Activated T-helper 1 cell treated with anti-CD3 and anti-CD28 coated beads, Interleukin-12 subunit alpha, Interleukin-12 subunit beta, Interleukin-2, Interleukin-4 antibody, amounts not matched to agents 30 ng/mL and 10 ng/mL and 1 ng/mL, durations not matched to agents 14 hours and 24 hours and 36 hours (primary cell): ENCODE measurements at regions of chr2 and their contacts with region 1.

Region 1: DNA sequence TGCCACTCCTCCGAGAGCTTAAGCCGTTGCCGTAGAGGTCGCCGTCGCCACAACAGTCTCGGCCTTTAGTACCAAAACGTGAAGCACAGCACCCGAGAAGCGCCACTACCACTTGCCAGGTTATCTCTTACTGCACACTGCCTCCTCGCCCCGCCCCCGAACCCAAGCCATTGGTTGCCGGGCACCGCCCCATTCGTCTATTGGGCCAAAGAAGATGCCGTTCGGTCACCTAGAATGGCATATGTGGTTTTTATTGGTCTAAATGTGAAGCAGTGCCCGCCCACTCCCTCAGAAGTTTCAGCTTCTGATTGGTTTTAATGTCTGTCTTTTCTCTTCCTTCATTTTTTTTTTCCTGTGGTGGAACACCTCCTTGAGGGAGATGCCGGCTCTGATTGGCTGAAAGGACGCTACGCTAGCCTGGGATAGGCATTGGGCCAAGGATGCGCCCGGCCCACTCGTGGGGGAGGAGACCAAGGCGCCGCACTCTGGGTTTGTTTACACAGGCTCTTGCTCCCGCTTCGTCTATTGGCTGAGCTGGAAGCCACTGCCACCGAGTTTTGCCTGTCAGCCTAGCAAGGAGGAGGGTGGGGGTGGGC is at the start of gene PAIP2B:
- DNase-seq: peak; percentile 97
- H3K4me3 Mint-ChIP-seq: peak within 1 kb of the TSS; percentile 91
- H3K27ac Mint-ChIP-seq: peak within 1 kb of the TSS; percentile 54
- H3K4me1 Mint-ChIP-seq: peaks cover 12% of the 10 kb centered on the region
- H3K27me3 Mint-ChIP-seq: peaks cover 10% of the 10 kb centered on the region
- total RNA-seq, gene PAIP2B: 0.41 and 0.44 TPM in 2 replicates

Region 2: GRCh38 chr2:70233926-70234325 is 993.1 kb before region 1 on chr2:
- intact Hi-C with region 1: no loop called
- DNase-seq: no peak
- H3K4me3 Mint-ChIP-seq: no peak overlapping the region
- H3K27ac Mint-ChIP-seq: no peak overlapping the region
- H3K4me1 Mint-ChIP-seq: peaks cover 5% of the 10 kb centered on the region
- H3K27me3 Mint-ChIP-seq: no peaks in the 10 kb centered on the region

Region 3: GRCh38 chr2:70977605-70978205 is 249.4 kb before region 1 on chr2:
- intact Hi-C with region 1: loop called (anchors 5 kb)
- DNase-seq: no peak
- H3K4me3 Mint-ChIP-seq: peak overlapping the region; percentile 78
- H3K27ac Mint-ChIP-seq: no peak overlapping the region
- H3K4me1 Mint-ChIP-seq: peaks cover 18% of the 10 kb centered on the region
- H3K27me3 Mint-ChIP-seq: peaks cover under 1% of the 10 kb centered on the region

Region 4: DNA sequence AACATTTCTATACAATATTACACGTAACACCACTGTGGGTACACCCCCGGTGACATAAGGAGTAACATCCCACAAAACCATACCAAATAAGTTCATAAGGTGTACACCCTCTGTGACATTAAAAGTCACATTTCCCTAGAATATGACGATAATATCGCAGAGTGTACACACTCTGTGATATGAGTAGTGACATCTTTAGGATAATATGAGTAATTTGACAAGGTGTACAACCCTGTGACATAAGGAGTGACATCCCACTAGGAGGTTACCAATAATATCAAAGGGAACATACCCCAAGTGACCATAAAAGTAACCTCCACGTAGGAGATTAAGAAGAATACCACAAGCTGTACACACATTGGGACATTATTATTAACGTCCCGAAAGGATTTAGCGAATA is 208.4 kb before region 1 on chr2:
- intact Hi-C with region 1: loop called (anchors 2 kb)
- DNase-seq: no peak
- H3K4me3 Mint-ChIP-seq: no peak overlapping the region
- H3K27ac Mint-ChIP-seq: no peak overlapping the region
- H3K4me1 Mint-ChIP-seq: peaks cover 7% of the 10 kb centered on the region
- H3K27me3 Mint-ChIP-seq: no peaks in the 10 kb centered on the region

Region 5: DNA sequence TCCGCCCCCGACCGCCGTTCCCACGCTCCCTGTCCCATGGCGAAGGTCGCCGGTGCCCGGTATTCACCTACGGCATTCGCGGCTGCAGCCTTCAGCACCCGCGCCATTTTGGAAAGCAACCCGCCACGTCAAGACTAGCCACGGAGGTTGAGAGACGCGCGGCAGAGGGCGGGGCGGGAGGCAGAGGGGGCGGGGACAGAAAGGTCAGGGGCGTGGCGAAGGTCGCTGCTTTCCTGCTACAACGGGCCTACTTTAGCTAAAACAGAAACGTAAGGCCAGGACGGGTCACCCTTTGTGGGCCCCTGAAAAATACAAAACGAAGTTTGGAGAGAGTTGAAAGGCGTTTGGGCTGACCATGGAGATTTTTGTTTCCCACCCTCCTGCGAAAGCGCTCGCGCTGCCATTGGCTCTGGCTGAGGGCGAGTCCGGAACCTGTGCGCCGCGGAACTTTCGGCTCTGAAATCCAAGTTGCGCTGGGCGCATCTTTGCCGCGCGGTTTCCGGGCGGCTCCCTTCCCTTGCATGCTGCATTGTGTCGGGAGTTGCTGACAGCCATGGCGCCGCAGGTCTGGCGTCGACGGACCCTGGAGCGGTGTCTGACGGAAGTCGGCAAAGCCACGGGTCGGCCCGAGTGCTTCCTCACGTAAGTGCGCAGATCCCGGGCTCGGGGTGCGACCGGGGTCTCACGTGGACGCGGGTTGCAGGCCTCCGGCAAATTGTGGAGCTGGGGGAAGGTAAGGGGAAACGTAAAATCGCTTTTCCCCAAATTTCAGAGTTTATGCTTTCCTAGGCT is 96.8 kb before region 1 on chr2 and contains the starts of genes MCEE and MPHOSPH10:
- intact Hi-C with region 1: loop called (anchors 1 kb)
- DNase-seq: peak; percentile 89
- H3K4me3 Mint-ChIP-seq: no peak within 1 kb of the TSS
- H3K27ac Mint-ChIP-seq: peak within 1 kb of the TSS; percentile 69
- H3K4me1 Mint-ChIP-seq: peaks cover 11% of the 10 kb centered on the region
- H3K27me3 Mint-ChIP-seq: no peaks in the 10 kb centered on the region
- total RNA-seq, gene MCEE: 11.4 and 14.7 TPM in 2 replicates
- total RNA-seq, gene MPHOSPH10: 67.5 and 68.8 TPM in 2 replicates

Region 6: GRCh38 chr2:71331581-71332434 is 104.7 kb after region 1 on chr2 and contains the start of gene ZNF638:
- intact Hi-C with region 1: loop called (anchors 1 kb)
- DNase-seq: peak; percentile 90
- H3K4me3 Mint-ChIP-seq: peak within 1 kb of the TSS; percentile 99
- H3K27ac Mint-ChIP-seq: peak within 1 kb of the TSS; percentile 100
- H3K4me1 Mint-ChIP-seq: peaks cover 27% of the 10 kb centered on the region
- H3K27me3 Mint-ChIP-seq: peaks cover 6% of the 10 kb centered on the region
- total RNA-seq, gene ZNF638: 88.8 and 96.8 TPM in 2 replicates

Region 7: GRCh38 chr2:73112913-73113633 is 1886.0 kb after region 1 on chr2 and contains the start of gene RAB11FIP5:
- intact Hi-C with region 1: loop called (anchors 5 kb)
- DNase-seq: peak; percentile 81
- H3K4me3 Mint-ChIP-seq: peak within 1 kb of the TSS; percentile 84
- H3K27ac Mint-ChIP-seq: peak within 1 kb of the TSS; percentile 46
- H3K4me1 Mint-ChIP-seq: peaks cover 25% of the 10 kb centered on the region
- H3K27me3 Mint-ChIP-seq: peaks cover 14% of the 10 kb centered on the region
- total RNA-seq, gene RAB11FIP5: 12.1 and 12.9 TPM in 2 replicates